ENCODE measurements at regions of chr5 and their contacts with region 1.

Region 1: GRCh38 chr5:141923448-141924352 is at the start of gene DELE1:
- DNase-seq: peak; percentile 98
- H3K4me3 Mint-ChIP-seq: peak within 1 kb of the TSS; percentile 75
- H3K27ac Mint-ChIP-seq: peak within 1 kb of the TSS; percentile 94
- H3K4me1 Mint-ChIP-seq: peaks cover 11% of the 10 kb centered on the region
- H3K27me3 Mint-ChIP-seq: no peaks in the 10 kb centered on the region
- CTCF ChIP-seq: no peak
- total RNA-seq, gene DELE1: 88.1 and 91.3 TPM in 2 replicates

Region 2: GRCh38 chr5:141713616-141714309 is 209.9 kb before region 1 on chr5:
- CTCF ChIA-PET with region 1: interaction called, 4 read pairs
- POLR2A ChIA-PET with region 1: interaction called, 10 read pairs
- intact Hi-C with region 1: no loop called
- DNase-seq: peak; percentile 96
- H3K4me3 Mint-ChIP-seq: peak overlapping the region; percentile 5
- H3K27ac Mint-ChIP-seq: peak overlapping the region; percentile 73
- H3K4me1 Mint-ChIP-seq: peaks cover 37% of the 10 kb centered on the region
- H3K27me3 Mint-ChIP-seq: no peaks in the 10 kb centered on the region
- CTCF ChIP-seq: no peak

Region 3: GRCh38 chr5:141934099-141934844 is 10.6 kb after region 1 on chr5:
- CTCF ChIA-PET with region 1: interaction called, 10 read pairs
- POLR2A ChIA-PET with region 1: interaction called, 51 read pairs
- intact Hi-C with region 1: no loop called
- DNase-seq: no peak
- H3K4me3 Mint-ChIP-seq: no peak overlapping the region
- H3K27ac Mint-ChIP-seq: peak overlapping the region; percentile 55
- H3K4me1 Mint-ChIP-seq: peaks cover 19% of the 10 kb centered on the region
- H3K27me3 Mint-ChIP-seq: no peaks in the 10 kb centered on the region
- CTCF ChIP-seq: no peak

Region 4: GRCh38 chr5:141940695-141941271 is 17.1 kb after region 1 on chr5:
- CTCF ChIA-PET with region 1: interaction called, 5 read pairs
- POLR2A ChIA-PET with region 1: interaction called, 51 read pairs
- intact Hi-C with region 1: no loop called
- DNase-seq: no peak
- H3K4me3 Mint-ChIP-seq: no peak overlapping the region
- H3K27ac Mint-ChIP-seq: peak overlapping the region; percentile 28
- H3K4me1 Mint-ChIP-seq: peaks cover 9% of the 10 kb centered on the region
- H3K27me3 Mint-ChIP-seq: no peaks in the 10 kb centered on the region
- CTCF ChIP-seq: no peak

Region 5: DNA sequence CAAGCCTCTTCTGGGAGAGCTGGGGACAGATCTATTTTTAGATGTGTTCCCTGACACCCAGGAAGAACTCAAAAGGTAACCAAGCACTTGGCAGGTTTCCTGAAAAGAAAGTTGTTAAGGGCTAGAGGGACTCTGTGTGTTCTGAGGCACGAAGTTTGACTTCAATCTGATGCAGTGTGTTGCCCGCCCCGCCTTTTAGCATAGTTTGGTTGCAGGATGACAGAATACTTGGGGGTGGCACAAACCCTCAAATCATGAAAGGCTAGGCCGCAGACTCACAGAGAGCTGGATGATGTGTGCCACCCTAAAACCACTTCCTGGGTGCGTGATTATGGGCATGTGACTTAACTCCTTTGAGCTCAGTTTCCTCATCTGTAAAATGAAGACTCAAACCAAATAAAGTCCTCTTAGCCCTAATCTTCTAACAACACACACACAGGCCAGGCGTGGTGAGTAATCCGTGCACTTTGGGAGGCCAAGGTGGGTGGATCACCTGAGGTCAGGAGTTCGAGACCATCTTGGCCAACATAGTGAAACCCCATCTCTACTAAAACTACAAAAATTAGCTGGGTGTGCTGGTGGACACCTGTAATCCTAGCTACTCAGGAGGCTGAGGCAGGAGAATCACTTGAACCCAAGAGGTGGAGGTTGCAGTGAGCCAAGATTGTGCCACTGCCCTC is 172.1 kb after region 1 on chr5:
- CTCF ChIA-PET with region 1: no interaction called
- POLR2A ChIA-PET with region 1: no interaction called
- intact Hi-C with region 1: no loop called
- DNase-seq: no peak
- H3K4me3 Mint-ChIP-seq: no peak overlapping the region
- H3K27ac Mint-ChIP-seq: no peak overlapping the region
- H3K4me1 Mint-ChIP-seq: peaks cover 20% of the 10 kb centered on the region
- H3K27me3 Mint-ChIP-seq: no peaks in the 10 kb centered on the region
- CTCF ChIP-seq: no peak

Measured in MCF 10A (cell line).